ENCODE measurements at regions of chr3 and their contacts with region 1.

Region 1: GRCh38 chr3:113745273-113746068 is 578 bp downstream of the NAA50 start:
- DNase-seq: peak; percentile 92
- H3K4me3 ChIP-seq: peak overlapping the region; percentile 62 to 97 (median 90)
- H3K27ac ChIP-seq: peak overlapping the region; percentile 97
- H3K4me1 ChIP-seq: peaks cover 32% of the 10 kb centered on the region
- H3K27me3 ChIP-seq: no peaks in the 10 kb centered on the region
- CTCF ChIP-seq: peak; percentile 71 to 73

Region 2: DNA sequence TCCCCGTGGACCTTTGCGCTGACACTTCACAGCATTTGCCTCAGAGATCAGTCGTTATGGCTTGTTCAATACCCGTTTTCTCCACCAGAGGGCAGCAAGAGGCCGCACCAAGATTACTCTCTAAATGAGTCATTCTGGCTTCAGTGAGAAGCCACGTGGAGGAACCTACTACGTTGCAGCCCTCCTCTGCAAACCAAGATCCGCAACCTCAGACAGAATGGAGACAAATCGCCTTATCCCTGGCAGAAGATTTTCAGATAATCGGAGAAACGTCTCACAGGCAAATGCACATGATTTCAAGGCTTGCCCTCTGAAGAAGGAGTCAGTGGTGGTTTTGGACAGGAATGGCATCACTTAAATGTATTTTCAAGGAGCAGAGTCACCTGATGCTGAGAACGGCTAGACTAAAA is 694.2 kb before region 1 on chr3:
- CTCF ChIA-PET with region 1: no interaction called
- dilution Hi-C with region 1: no loop called
- in situ Hi-C with region 1: no loop called
- intact Hi-C with region 1: loop called (anchors 5 kb)
- DNase-seq: peak; percentile 64
- H3K4me3 ChIP-seq: no peak overlapping the region
- H3K27ac ChIP-seq: no peak overlapping the region
- H3K4me1 ChIP-seq: peaks cover 18% of the 10 kb centered on the region
- H3K27me3 ChIP-seq: no peaks in the 10 kb centered on the region
- CTCF ChIP-seq: peak; percentile 79 to 82

Region 3: GRCh38 chr3:113552851-113553250 is 192.6 kb before region 1 on chr3:
- CTCF ChIA-PET with region 1: no interaction called
- dilution Hi-C with region 1: no loop called
- in situ Hi-C with region 1: no loop called
- intact Hi-C with region 1: loop called (anchors 1 kb)
- DNase-seq: no peak
- H3K4me3 ChIP-seq: no peak overlapping the region
- H3K27ac ChIP-seq: no peak overlapping the region
- H3K4me1 ChIP-seq: peaks cover 14% of the 10 kb centered on the region
- H3K27me3 ChIP-seq: no peaks in the 10 kb centered on the region
- CTCF ChIP-seq: peak in 1 of 2 donors; percentile 24

Region 4: GRCh38 chr3:113626503-113627371 is 118.7 kb before region 1 on chr3:
- CTCF ChIA-PET with region 1: no interaction called
- dilution Hi-C with region 1: no loop called
- in situ Hi-C with region 1: no loop called
- intact Hi-C with region 1: loop called (anchors 2 kb)
- DNase-seq: peak; percentile 55
- H3K4me3 ChIP-seq: no peak overlapping the region
- H3K27ac ChIP-seq: no peak overlapping the region
- H3K4me1 ChIP-seq: no peaks in the 10 kb centered on the region
- H3K27me3 ChIP-seq: no peaks in the 10 kb centered on the region
- CTCF ChIP-seq: peak; percentile 94 to 99

Region 5: DNA sequence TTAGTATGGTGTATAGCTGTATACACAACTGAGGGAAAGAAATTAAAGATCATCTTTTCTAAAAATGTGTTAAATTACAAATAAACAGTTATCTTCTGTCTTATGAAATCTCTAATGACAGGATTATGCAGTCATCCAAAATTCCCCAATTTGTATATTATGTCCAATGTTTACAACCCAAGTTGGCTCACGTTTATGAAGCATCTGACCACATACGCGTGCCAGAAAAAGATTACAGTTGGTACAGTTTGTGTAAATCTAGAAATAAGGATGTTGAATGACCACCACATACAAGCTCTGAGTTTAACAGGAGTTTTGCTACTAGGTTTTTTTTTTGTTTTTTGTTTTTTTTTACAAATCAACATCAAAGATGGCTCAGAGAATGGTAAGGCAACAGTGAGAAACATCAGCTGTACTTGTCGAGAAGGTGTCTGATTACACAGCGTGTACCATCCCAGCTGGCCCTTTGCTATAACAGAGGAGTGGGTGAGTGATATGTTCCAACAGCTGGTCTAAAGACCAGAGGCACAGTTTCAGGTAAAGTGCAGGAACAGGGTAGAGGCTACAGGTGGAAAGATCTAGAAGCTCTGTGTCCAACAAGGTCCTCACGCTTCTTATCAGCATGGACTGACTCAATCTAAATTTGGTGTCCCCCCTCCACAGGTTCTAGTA is 96.2 kb before region 1 on chr3:
- CTCF ChIA-PET with region 1: no interaction called
- dilution Hi-C with region 1: no loop called
- in situ Hi-C with region 1: no loop called
- intact Hi-C with region 1: no loop called
- DNase-seq: no peak
- H3K4me3 ChIP-seq: no peak overlapping the region
- H3K27ac ChIP-seq: no peak overlapping the region
- H3K4me1 ChIP-seq: no peaks in the 10 kb centered on the region
- H3K27me3 ChIP-seq: no peaks in the 10 kb centered on the region
- CTCF ChIP-seq: no peak

Region 6: DNA sequence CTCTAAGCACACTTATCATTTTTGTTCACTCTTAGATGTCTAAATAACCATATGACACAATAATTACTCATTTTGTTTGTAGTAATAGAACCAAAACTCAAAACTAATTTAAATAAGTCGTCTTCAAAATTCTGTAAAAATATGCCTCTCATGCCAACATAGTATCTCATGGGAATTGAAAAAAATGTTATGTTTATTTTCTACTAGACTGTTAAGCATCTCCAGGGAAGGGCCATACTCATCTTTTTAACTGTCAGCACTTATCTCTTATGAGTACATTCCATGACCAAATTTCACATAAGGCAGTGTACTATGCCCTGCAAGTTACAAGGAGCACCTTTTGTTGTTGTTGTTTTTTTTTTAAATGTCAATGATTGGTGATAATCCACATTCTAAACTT is 30.8 kb before region 1 on chr3:
- CTCF ChIA-PET with region 1: interaction called, 11 read pairs
- dilution Hi-C with region 1: no loop called
- in situ Hi-C with region 1: no loop called
- intact Hi-C with region 1: no loop called
- DNase-seq: no peak
- H3K4me3 ChIP-seq: no peak overlapping the region
- H3K27ac ChIP-seq: no peak overlapping the region
- H3K4me1 ChIP-seq: peaks cover 13% of the 10 kb centered on the region
- H3K27me3 ChIP-seq: no peaks in the 10 kb centered on the region
- CTCF ChIP-seq: no peak

Region 7: DNA sequence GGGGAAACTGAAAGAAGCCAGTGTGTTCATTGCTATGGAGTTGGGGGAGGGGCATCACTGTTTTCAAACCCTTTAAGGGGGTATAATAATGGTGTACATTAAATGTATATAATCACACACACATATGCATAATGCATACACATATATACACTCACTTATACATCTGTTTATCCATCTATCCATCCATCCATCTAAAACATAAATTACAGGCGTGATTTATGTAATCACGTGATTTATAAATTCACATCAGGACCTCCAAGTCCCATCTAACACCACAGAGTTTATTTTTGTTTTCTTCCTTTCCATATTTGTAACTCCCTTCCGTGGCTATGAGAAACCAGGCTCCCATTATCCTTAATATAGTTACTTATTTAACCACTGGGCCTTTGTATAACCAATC is 132.9 kb after region 1 on chr3:
- CTCF ChIA-PET with region 1: no interaction called
- dilution Hi-C with region 1: no loop called
- in situ Hi-C with region 1: no loop called
- intact Hi-C with region 1: no loop called
- DNase-seq: no peak
- H3K4me3 ChIP-seq: no peak overlapping the region
- H3K27ac ChIP-seq: no peak overlapping the region
- H3K4me1 ChIP-seq: no peaks in the 10 kb centered on the region
- H3K27me3 ChIP-seq: no peaks in the 10 kb centered on the region
- CTCF ChIP-seq: no peak

Measured in mammary epithelial cell (primary cell).